Activated CD4-positive, alpha-beta memory T cell treated with anti-CD3 and anti-CD28 coated beads for 36 hours (primary cell): ENCODE measurements at regions of chrX and their contacts with region 1.

Region 1: GRCh38 chrX:16826207-16826606 is 39.9 kb downstream of the TXLNG start:
- DNase-seq: no peak
- H3K4me3 Mint-ChIP-seq: no peak overlapping the region
- H3K27ac Mint-ChIP-seq: peak overlapping the region; percentile 74
- H3K4me1 Mint-ChIP-seq: peaks cover 22% of the 10 kb centered on the region
- H3K27me3 Mint-ChIP-seq: no peaks in the 10 kb centered on the region

Region 2: GRCh38 chrX:16786139-16786790 is 39.9 kb before region 1 on chrX and contains the start of gene TXLNG:
- CTCF ChIA-PET with region 1: no interaction called
- POLR2A ChIA-PET with region 1: interaction called, 3 read pairs
- intact Hi-C with region 1: loop called (anchors 1 kb)
- DNase-seq: peak; percentile 96
- H3K4me3 Mint-ChIP-seq: peak within 1 kb of the TSS; percentile 86
- H3K27ac Mint-ChIP-seq: peak within 1 kb of the TSS; percentile 77
- H3K4me1 Mint-ChIP-seq: peaks cover 10% of the 10 kb centered on the region
- H3K27me3 Mint-ChIP-seq: no peaks in the 10 kb centered on the region
- total RNA-seq, gene TXLNG: 14.2 to 15.1 TPM

Region 3: DNA sequence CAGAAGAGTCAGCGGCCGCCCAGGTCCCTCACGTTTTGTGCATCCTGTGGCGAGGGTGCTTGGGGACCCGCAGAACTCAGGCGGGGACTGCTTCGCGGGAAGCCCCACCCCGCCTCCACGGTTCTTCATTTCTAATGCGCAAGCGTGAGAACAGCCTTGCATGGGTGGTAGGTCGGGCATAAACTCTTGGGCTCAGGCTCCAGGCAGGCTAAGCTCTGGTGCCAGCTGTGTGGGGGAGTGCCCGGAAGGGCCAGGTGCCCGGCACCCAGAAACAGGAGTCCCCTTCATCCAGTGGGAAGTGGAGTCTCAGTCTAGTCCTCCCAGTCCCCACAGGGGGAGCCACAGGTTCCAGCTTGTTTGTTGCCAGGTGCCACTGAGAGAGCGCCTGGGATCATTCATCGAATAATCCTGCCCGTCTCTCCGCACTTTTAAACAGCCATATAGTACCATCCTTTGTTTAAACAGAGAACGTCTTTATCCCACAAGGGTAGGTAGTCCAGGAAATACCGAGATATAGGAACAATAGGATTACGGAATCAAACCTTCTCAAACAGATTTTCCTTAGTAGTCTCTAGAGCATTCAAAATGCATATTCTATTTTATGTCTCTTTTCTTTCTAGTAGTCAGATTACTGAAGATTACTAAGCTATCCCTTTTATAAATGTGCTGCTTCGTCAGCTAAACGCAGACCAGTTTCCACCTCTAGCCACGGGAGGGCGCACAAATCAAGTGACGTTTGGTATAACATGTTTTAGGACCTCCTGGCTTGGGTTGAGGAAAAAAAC is 56.7 kb after region 1 on chrX:
- CTCF ChIA-PET with region 1: interaction called, 14 read pairs
- POLR2A ChIA-PET with region 1: no interaction called
- intact Hi-C with region 1: no loop called
- DNase-seq: peak; percentile 79
- H3K4me3 Mint-ChIP-seq: peak overlapping the region; percentile 69
- H3K27ac Mint-ChIP-seq: peak overlapping the region; percentile 51
- H3K4me1 Mint-ChIP-seq: peaks cover 3% of the 10 kb centered on the region
- H3K27me3 Mint-ChIP-seq: peaks cover 2% of the 10 kb centered on the region

Region 4: GRCh38 chrX:17046478-17047097 is 220.4 kb after region 1 on chrX:
- CTCF ChIA-PET with region 1: interaction called, 27 read pairs
- POLR2A ChIA-PET with region 1: no interaction called
- intact Hi-C with region 1: loop called (anchors 1 kb)
- DNase-seq: peak; percentile 48
- H3K4me3 Mint-ChIP-seq: no peak overlapping the region
- H3K27ac Mint-ChIP-seq: no peak overlapping the region
- H3K4me1 Mint-ChIP-seq: no peaks in the 10 kb centered on the region
- H3K27me3 Mint-ChIP-seq: no peaks in the 10 kb centered on the region